Activated CD8-positive, alpha-beta T cell treated with anti-CD3 and anti-CD28 coated beads, Interleukin-2, amount 10 ng/mL, durations not matched to agents 7 days and 5 days (primary cell): ENCODE measurements at regions of chr11 and their contacts with region 1.

Region 1: DNA sequence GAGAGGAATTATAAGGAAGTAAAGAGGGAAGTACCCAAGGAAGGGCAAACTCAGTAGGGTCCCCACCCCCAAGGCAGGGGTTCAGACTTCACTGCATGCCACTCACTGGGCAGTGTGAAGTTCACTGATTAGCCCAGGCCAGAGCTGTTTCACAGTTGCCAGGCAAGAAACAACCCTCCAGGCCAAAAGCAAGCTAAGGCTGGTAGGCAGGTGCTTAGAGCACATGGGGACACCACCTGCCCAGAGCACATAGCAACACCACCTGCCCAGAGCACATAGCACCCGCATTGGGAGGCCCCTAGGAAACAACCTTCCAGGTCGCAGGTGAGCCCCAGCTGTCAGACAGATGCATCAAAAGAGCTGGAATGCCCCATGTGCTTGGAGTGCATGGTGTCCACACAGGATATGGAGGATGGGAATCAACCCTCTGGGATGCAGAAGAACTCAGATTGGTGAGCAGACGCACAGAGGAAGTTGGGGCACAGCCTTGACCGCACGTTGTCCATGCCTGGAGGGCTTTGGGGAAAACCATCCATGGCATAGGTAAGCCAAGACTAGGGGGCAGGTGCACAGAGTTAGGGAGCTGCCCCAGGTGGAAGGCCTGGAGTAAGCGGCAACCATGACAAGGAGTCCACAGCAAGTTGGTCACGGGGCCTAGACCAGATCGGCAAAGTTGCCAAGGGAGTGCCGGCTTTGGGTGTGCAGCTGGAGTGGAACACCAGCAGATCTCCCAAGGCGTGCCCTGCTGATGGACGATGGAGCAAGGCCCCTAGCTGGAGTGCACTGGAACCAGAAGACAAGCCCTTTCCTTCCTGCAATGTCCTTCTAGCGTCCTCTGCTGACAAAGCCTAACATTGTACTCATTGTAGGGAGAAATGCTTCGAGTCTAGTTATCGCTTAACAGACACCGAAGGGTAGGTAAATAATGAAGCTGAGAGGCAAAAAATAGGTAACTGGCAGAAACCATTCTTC is 7.8 kb upstream of the TMEM216 start:
- DNase-seq: no peak
- ATAC-seq: no peak
- H3K4me3 Mint-ChIP-seq: no peak overlapping the region
- H3K27ac Mint-ChIP-seq: no peak overlapping the region
- H3K4me1 Mint-ChIP-seq: peaks cover 7% of the 10 kb centered on the region
- H3K27me3 Mint-ChIP-seq: peaks cover 3% of the 10 kb centered on the region

Region 2: GRCh38 chr11:61294717-61295595 is 89.6 kb before region 1 on chr11 and contains the start of gene VWCE:
- CTCF ChIA-PET with region 1: interaction called, 15 read pairs
- POLR2A ChIA-PET with region 1: interaction called, 3 read pairs
- DNase-seq: peak; percentile 84
- ATAC-seq: peak; percentile 87
- H3K4me3 Mint-ChIP-seq: peak within 1 kb of the TSS; percentile 79
- H3K27ac Mint-ChIP-seq: peak within 1 kb of the TSS; percentile 79
- H3K4me1 Mint-ChIP-seq: peaks cover 48% of the 10 kb centered on the region
- H3K27me3 Mint-ChIP-seq: no peaks in the 10 kb centered on the region
- total RNA-seq, gene VWCE: 2.2 to 3.3 TPM

Region 3: DNA sequence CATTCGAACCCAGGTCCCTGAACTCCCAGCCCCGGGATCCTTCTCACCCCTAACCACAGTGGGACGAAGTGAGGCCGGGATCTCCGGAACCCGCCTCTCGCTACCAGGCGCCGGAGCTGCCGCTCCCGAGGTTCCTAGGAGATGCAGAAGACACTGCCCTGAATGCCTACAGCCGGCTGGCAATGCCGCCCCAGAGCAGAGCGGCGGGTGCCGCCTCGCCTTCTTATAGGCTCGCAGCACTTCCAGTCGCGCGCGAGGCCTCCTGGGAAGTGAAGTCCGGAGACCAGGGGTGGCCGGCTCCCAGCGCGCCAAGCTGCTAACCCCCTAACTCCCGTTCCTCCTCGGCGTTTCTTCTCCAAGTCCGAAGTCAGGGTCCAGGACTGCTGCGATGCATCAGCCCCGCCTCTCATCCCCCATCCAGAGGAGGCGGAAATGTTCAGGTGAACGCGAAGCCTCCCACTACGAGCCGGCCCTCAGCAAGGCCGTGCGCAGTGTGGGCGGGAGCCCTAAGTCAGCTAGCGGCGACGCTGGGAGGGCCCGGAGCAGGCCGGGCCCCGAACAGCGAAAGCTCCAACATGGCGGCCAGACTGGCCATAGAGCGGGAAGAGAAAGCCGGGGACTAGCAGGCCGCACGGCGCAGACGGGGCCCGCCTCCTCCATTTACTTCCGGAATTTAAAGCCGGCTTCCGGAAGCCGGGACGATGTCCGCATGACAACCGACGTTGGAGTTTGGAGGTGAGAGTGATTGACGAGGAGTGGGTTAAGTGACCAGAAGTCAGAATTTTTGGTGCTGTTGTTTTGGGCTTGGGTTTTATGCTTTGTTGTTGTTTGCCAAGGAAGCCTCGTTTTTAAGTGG is 22.6 kb before region 1 on chr11 and contains the starts of genes CYB561A3 and TMEM138:
- CTCF ChIA-PET with region 1: interaction called, 65 read pairs
- POLR2A ChIA-PET with region 1: interaction called, 9 read pairs
- DNase-seq: peak; percentile 95
- ATAC-seq: peak; percentile 97
- H3K4me3 Mint-ChIP-seq: peak within 1 kb of the TSS; percentile 95
- H3K27ac Mint-ChIP-seq: peak within 1 kb of the TSS; percentile 94
- H3K4me1 Mint-ChIP-seq: peaks cover 37% of the 10 kb centered on the region
- H3K27me3 Mint-ChIP-seq: no peaks in the 10 kb centered on the region
- total RNA-seq, gene CYB561A3: 53.2 to 55.6 TPM
- total RNA-seq, gene TMEM138: 57.4 to 57.5 TPM

Region 4: GRCh38 chr11:61403658-61404057 is 19.1 kb after region 1 on chr11:
- CTCF ChIA-PET with region 1: interaction called, 32 read pairs
- POLR2A ChIA-PET with region 1: interaction called, 3 read pairs
- DNase-seq: no peak
- ATAC-seq: no peak
- H3K4me3 Mint-ChIP-seq: no peak overlapping the region
- H3K27ac Mint-ChIP-seq: no peak overlapping the region
- H3K4me1 Mint-ChIP-seq: no peaks in the 10 kb centered on the region
- H3K27me3 Mint-ChIP-seq: no peaks in the 10 kb centered on the region

Region 5: GRCh38 chr11:61446211-61446651 is 61.7 kb after region 1 on chr11:
- CTCF ChIA-PET with region 1: no interaction called
- POLR2A ChIA-PET with region 1: no interaction called
- DNase-seq: peak; percentile 83
- ATAC-seq: peak; percentile 93
- H3K4me3 Mint-ChIP-seq: no peak overlapping the region
- H3K27ac Mint-ChIP-seq: no peak overlapping the region
- H3K4me1 Mint-ChIP-seq: peaks cover 2% of the 10 kb centered on the region
- H3K27me3 Mint-ChIP-seq: no peaks in the 10 kb centered on the region

Region 6: GRCh38 chr11:61460474-61460881 is 75.9 kb after region 1 on chr11:
- CTCF ChIA-PET with region 1: no interaction called
- POLR2A ChIA-PET with region 1: no interaction called
- DNase-seq: no peak
- ATAC-seq: no peak
- H3K4me3 Mint-ChIP-seq: no peak overlapping the region
- H3K27ac Mint-ChIP-seq: no peak overlapping the region
- H3K4me1 Mint-ChIP-seq: peaks cover 2% of the 10 kb centered on the region
- H3K27me3 Mint-ChIP-seq: no peaks in the 10 kb centered on the region

Region 7: DNA sequence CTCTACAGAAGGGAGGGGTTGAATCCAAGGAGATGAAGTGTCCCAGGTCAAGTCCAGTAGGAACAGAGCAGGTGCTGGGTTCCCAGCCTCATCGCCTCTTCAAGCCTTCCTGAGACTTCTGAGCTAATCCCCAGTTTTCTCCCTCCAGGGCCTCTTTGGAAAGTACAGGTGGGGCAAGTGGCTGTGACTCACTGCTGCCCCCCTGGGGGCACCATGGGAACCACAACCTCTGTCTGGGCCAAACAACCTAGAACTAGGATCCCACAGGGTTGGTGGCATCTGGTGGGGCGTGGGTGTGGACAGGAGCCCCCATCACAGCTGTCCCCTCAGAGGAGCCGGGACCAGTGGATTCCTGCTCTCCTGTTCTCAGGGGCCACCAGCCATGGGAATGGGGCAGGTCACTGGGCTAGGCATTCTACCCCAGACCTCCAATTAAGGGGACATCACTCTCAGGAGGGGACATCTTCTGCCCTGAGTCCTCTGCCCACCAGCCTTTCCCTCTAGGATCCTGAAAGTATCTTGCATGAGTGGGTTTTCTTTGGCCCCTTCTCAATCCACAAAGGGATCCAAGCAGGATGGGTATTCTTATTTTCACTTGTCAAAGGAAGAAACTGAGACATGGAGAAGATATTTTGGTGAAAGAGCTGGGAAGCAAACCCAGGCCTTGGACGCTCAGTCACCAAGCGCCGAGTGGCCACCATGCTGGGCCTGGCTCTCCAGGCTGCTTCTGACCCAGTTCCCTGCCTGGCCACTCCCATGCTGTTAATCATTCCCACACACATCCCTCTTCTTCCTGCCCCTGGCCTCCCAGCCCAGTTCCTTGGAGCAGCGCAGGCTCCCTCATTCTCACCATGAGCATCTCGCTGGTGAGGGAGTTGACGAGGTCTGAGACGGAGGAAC is 147.8 kb after region 1 on chr11:
- CTCF ChIA-PET with region 1: no interaction called
- POLR2A ChIA-PET with region 1: no interaction called
- DNase-seq: peak; percentile 57
- ATAC-seq: peak; percentile 63
- H3K4me3 Mint-ChIP-seq: no peak overlapping the region
- H3K27ac Mint-ChIP-seq: no peak overlapping the region
- H3K4me1 Mint-ChIP-seq: no peaks in the 10 kb centered on the region
- H3K27me3 Mint-ChIP-seq: peaks cover 4% of the 10 kb centered on the region